ENCODE measurements at regions of chr2 and their contacts with region 1.

Region 1: DNA sequence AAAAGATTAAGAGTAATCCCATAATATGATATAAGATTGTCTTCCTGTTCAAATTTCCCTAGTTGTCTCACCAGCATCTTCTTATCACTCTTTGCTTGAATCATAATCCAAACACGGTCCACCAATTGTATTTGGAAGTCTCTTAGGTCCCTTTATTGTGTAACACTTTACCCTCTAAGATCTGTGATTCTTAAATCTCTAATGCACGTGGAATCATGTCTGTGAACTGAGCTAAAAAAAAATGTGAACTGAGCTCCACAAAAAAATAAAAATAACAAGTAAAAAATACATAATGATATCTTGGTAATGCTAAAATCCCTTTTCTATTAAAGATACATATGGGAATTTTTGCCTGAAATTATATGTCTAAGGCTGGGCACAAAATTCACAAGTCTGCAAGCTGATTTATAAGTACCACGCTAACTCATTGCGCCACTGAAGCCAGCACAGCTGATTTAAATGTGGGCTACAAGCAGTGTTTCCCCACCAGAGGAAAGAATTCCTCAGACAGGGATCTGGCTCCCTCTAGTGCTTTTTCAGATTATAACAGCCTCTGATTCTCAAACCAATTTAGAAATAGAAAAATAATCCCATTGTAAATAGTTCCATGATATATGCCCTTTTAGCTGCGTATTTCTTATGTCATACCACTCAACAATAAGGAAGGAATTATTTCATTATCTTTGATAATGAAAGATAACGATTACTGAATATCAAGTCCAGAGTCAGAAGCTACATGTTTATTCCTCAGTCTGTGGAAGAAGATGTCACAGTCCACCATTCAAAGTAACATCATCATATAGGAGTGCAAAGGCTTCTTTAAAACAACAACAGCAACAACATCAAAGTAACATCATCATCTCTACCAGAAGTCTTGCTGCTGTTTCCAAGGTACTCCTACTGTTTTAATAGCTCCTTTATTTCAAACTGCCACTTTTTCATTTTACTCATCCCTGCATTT is 22.9 kb downstream of the RBM43 start:
- DNase-seq: peak; percentile 59
- CTCF ChIP-seq: peak; percentile 71

Region 2: GRCh38 chr2:151181524-151181923 is 57.3 kb before region 1 on chr2:
- CTCF ChIA-PET with region 1: no interaction called
- POLR2A ChIA-PET with region 1: no interaction called
- DNase-seq: no peak
- CTCF ChIP-seq: no peak

Region 3: GRCh38 chr2:151198640-151199039 is 40.2 kb before region 1 on chr2:
- CTCF ChIA-PET with region 1: no interaction called
- POLR2A ChIA-PET with region 1: no interaction called
- DNase-seq: no peak
- CTCF ChIP-seq: no peak

Region 4: GRCh38 chr2:151251012-151251411 is 12.2 kb after region 1 on chr2:
- CTCF ChIA-PET with region 1: interaction called, 19 read pairs
- POLR2A ChIA-PET with region 1: no interaction called
- DNase-seq: no peak
- CTCF ChIP-seq: no peak

Region 5: GRCh38 chr2:151261231-151261976 is 22.6 kb after region 1 on chr2 and contains the start of gene RBM43:
- CTCF ChIA-PET with region 1: interaction called, 15 read pairs
- POLR2A ChIA-PET with region 1: no interaction called
- DNase-seq: peak; percentile 92
- CTCF ChIP-seq: no peak

Region 6: GRCh38 chr2:151569170-151569569 is 330.4 kb after region 1 on chr2:
- CTCF ChIA-PET with region 1: no interaction called
- POLR2A ChIA-PET with region 1: no interaction called
- DNase-seq: no peak
- CTCF ChIP-seq: no peak

Measured in GM10248 (cell line).